ENCODE measurements at regions of chr16 and their contacts with region 1.

Region 1: DNA sequence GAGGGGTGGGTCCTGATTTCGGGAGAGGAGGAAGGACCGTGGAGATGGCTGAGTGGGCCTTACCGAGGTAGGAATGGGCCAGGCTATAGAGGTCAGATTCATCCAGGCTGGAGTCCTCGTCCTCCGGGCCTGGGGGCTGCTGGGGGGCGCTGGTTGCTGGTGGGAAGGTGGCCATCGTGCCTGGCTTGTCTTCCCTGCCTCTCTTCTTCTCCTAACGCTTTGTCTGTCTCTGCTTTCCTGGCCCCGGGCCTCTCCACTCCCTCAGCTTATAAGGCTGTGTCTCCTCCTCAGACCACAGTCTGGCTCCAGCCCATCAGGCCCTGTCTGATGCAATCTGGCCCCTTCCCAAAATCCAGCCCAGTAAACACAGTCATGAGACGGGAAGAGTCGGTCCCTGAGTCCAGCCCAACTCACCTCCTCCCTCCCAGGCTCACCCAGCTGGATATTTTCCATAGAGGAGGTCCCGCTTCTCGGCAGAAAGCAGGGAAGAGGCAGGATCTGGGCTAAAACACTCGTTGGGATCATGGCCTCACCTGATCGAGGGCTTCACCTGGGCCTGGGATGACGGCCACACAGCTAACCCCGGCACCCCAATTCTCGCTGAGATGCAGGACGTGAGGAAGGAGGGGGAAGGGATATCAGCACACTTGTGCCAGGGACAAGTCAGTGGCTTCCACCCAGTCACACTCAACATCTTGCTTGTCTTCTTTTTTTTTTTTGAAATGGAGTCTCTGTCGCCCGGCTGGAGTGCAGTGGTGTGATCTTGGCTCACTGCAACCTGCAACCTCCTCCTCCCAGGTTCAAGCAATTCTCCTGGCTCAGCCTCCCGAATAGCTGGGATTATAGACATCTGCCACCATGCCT is at the start of gene NUPR1:
- DNase-seq: peak; percentile 97
- ATAC-seq: peak; percentile 91
- H3K4me3 ChIP-seq: peak within 1 kb of the TSS; percentile 49
- H3K27ac ChIP-seq: peak within 1 kb of the TSS; percentile 95
- H3K4me1 ChIP-seq: peaks cover 9% of the 10 kb centered on the region
- H3K27me3 ChIP-seq: no peaks in the 10 kb centered on the region
- CTCF ChIP-seq: no peak
- POLR2A ChIP-seq: peak; percentile 88
- RAD21 ChIP-seq: no peak
- total RNA-seq, gene NUPR1: 5.8 and 10.2 TPM in 2 replicates

Region 2: DNA sequence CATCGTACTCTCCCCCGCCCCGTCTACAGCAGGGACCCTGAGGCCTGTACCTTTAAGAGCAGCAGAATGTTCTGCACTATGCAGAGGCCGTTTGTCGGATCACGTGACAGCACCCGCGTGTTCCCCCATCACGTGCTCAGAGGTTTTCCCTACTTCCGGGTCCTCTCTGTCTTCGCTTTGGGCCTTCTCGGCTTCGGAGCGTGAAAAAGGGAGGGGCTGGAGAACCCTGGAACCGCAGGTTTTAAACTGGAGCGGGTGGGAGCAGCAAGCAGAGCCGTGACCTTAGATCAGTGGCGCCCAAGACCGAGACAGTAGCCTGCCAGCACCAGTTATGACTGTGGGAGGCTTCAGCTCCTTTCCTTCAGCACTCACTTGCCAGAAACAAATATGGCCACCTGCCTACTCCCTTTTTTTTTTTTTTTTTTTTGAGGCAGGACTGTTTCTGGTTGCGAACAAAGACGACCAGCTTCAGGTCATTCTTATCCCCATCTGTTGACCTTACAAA is 46.9 kb before region 1 on chr16 and contains the start of gene CLN3:
- CTCF ChIA-PET with region 1: interaction called, 3 read pairs
- POLR2A ChIA-PET with region 1: interaction called, 7 read pairs
- dilution Hi-C with region 1: no loop called
- in situ Hi-C with region 1: no loop called
- intact Hi-C with region 1: loop called (anchors 5 kb)
- DNase-seq: peak; percentile 94
- ATAC-seq: peak; percentile 97
- H3K4me3 ChIP-seq: peak within 1 kb of the TSS; percentile 97
- H3K27ac ChIP-seq: peak within 1 kb of the TSS; percentile 100
- H3K4me1 ChIP-seq: no peaks in the 10 kb centered on the region
- H3K27me3 ChIP-seq: no peaks in the 10 kb centered on the region; the same call in 1 of the 2 replicates
- CTCF ChIP-seq: no peak
- POLR2A ChIP-seq: no peak
- RAD21 ChIP-seq: no peak
- total RNA-seq, gene CLN3: 3.3 and 3.9 TPM in 2 replicates

Region 3: DNA sequence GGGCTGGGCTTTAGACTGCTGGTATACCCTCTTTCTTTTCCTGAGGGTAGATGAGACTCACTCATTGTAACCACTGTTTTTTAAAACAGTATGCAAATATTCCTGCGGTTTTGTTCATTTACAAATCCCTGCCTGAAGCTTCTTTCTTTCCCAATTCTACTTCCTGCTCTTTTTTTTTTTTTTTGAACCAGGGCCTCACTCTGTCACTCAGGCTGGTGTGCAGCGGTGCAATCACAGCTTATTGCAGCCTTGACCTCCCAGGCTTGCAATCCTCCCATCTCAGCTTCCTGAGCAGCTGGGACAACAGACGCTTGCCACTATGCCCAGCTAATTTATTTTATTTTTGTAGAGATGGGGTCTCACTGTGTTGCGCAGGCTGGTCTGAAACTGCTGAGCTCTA is 78.9 kb after region 1 on chr16:
- CTCF ChIA-PET with region 1: no interaction called
- POLR2A ChIA-PET with region 1: no interaction called
- dilution Hi-C with region 1: no loop called
- in situ Hi-C with region 1: no loop called
- intact Hi-C with region 1: loop called (anchors 5 kb)
- DNase-seq: no peak
- ATAC-seq: no peak
- H3K4me3 ChIP-seq: no peak overlapping the region
- H3K27ac ChIP-seq: no peak overlapping the region
- H3K4me1 ChIP-seq: no peaks in the 10 kb centered on the region
- H3K27me3 ChIP-seq: peaks cover 14% of the 10 kb centered on the region; the same call in 1 of the 2 replicates
- CTCF ChIP-seq: no peak
- POLR2A ChIP-seq: no peak
- RAD21 ChIP-seq: no peak

Region 4: GRCh38 chr16:28950648-28951409 is 411.9 kb after region 1 on chr16 and contains the start of gene NFATC2IP:
- CTCF ChIA-PET with region 1: no interaction called
- POLR2A ChIA-PET with region 1: no interaction called
- dilution Hi-C with region 1: no loop called
- in situ Hi-C with region 1: no loop called
- intact Hi-C with region 1: no loop called
- DNase-seq: peak; percentile 100
- ATAC-seq: peak; percentile 94
- H3K4me3 ChIP-seq: peak within 1 kb of the TSS; percentile 55
- H3K27ac ChIP-seq: peak within 1 kb of the TSS; percentile 80
- H3K4me1 ChIP-seq: peaks cover 8% of the 10 kb centered on the region
- H3K27me3 ChIP-seq: no peaks in the 10 kb centered on the region
- CTCF ChIP-seq: no peak
- POLR2A ChIP-seq: peak; percentile 38; the same call in 1 of the 2 replicates
- RAD21 ChIP-seq: no peak
- total RNA-seq, gene NFATC2IP: 8.1 and 10.0 TPM in 2 replicates

Measured in IMR-90 (cell line).